Head of caudate nucleus (tissue), 42 donors: ENCODE measurements at regions of chr17 and their contacts with region 1.

Region 1: GRCh38 chr17:10737168-10737622 is 7.4 kb upstream of the TMEM220 start:
- DNase-seq: peak; percentile 28 to 85 (median 68)

Region 2: GRCh38 chr17:10447026-10447931 is 289.9 kb before region 1 on chr17:
- intact Hi-C with region 1: no loop called
- DNase-seq: no peak

Region 3: GRCh38 chr17:10492004-10492403 is 245.2 kb before region 1 on chr17:
- intact Hi-C with region 1: no loop called
- DNase-seq: no peak

Region 4: GRCh38 chr17:10789694-10790271 is 52.6 kb after region 1 on chr17:
- intact Hi-C with region 1: loop called (anchors 5 kb)
- DNase-seq: no peak